ENCODE measurements at regions of chr10 and their contacts with region 1.

Region 1: DNA sequence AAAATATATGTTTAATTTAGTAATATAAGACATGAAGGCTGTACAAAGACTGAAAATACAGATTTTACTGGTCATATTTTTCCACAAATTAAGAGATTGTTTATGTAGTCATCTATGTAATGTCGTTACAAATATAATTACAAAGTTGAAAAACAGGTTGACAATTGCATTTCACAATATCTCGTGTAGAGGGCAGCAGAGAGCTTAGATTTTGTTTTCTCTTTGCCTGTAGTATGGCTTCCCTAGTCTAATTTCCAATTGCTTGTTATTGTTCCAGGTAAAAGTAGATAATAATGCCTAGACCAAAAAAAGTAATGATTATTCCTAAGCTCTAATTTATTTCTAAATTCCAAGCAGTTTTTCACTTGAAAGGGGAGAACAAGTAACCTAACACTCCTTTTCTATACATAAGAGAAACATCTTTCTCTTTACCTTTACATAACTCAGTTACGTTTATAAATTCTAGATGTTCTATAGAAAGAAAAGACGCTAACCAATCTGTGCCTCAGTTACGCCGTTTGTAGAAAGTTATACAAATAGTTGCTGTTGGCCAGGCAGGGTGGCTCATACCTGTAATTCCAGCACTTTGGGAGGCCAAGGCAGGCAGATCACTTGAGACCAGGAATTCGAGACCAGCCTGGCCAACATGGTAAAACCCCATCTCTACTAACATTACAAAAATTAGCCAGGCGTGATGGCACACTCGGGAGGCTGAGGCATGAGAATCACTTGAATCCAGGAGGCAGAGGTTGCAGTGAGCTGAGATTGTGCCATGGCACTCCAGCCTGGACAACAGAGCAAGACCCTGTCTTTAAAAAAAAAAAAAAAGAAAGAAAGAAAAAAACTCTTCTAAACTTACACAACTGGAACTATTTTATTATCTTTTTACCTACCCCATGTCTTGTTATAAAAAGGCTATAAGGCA is 30.0 kb downstream of the NET1 start:
- DNase-seq: peak; percentile 42 to 58 (median 52)
- ATAC-seq: peak; percentile 34
- H3K4me3 ChIP-seq: no peak overlapping the region
- H3K27ac ChIP-seq: no peak overlapping the region
- H3K4me1 ChIP-seq: peaks cover 22% of the 10 kb centered on the region
- H3K27me3 ChIP-seq: no peaks in the 10 kb centered on the region
- CTCF ChIP-seq: peak; percentile 54 to 91 (median 81)
- POLR2A ChIP-seq: no peak

Region 2: DNA sequence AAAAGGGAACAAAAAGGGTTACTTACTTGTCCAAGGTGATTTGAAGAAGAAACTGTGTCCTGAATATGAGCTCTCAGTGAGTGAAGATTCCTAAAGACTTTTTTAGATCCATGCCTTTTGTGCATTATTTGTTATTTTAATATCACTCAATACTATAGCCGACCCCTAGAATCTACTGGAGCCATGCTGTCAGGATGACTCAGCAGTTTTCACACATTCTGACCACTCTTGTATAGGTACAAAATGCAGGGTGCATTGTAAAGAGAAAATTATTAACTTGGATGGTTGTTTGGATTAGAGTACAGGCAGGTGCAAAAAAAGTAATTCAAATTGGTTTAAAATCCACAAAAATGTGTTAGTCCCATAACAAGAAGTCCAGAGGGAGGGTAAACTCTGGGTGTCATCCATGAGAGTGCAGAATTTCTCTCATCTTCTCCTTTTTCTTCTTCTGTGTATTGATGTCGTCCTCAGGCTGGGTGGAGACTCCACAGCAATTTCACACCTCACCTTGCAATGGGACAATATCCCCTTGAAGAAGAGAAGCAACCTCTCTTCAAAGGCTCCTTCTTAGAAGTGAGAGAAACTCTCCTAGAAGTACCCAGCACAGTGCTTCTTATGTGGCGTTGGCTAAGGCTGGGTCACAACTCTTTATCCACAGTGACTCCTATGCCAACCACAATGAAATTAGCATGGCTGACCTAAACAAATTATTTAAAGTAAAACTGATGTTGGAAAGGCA is 170.1 kb before region 1 on chr10:
- intact Hi-C with region 1: no loop called
- DNase-seq: no peak
- ATAC-seq: no peak
- H3K4me3 ChIP-seq: no peak overlapping the region
- H3K27ac ChIP-seq: no peak overlapping the region
- H3K4me1 ChIP-seq: no peaks in the 10 kb centered on the region
- H3K27me3 ChIP-seq: no peaks in the 10 kb centered on the region
- CTCF ChIP-seq: no peak
- POLR2A ChIP-seq: no peak

Region 3: GRCh38 chr10:5623081-5623748 is 180.9 kb after region 1 on chr10:
- intact Hi-C with region 1: loop called (anchors 5 kb)
- DNase-seq: peak; percentile 93 to 96 (median 95)
- ATAC-seq: peak; percentile 75
- H3K4me3 ChIP-seq: no peak overlapping the region
- H3K27ac ChIP-seq: no peak overlapping the region
- H3K4me1 ChIP-seq: peaks cover 43% of the 10 kb centered on the region
- H3K27me3 ChIP-seq: no peaks in the 10 kb centered on the region
- CTCF ChIP-seq: peak; percentile 85 to 96 (median 94)
- POLR2A ChIP-seq: no peak

Region 4: GRCh38 chr10:5764422-5765297 is 322.3 kb after region 1 on chr10:
- intact Hi-C with region 1: no loop called
- DNase-seq: no peak
- ATAC-seq: no peak
- H3K4me3 ChIP-seq: no peak overlapping the region
- H3K27ac ChIP-seq: no peak overlapping the region
- H3K4me1 ChIP-seq: peaks cover 4% of the 10 kb centered on the region
- H3K27me3 ChIP-seq: no peaks in the 10 kb centered on the region
- CTCF ChIP-seq: no peak
- POLR2A ChIP-seq: no peak